ENCODE measurements at regions of chr6 and their contacts with region 1.

Region 1: DNA sequence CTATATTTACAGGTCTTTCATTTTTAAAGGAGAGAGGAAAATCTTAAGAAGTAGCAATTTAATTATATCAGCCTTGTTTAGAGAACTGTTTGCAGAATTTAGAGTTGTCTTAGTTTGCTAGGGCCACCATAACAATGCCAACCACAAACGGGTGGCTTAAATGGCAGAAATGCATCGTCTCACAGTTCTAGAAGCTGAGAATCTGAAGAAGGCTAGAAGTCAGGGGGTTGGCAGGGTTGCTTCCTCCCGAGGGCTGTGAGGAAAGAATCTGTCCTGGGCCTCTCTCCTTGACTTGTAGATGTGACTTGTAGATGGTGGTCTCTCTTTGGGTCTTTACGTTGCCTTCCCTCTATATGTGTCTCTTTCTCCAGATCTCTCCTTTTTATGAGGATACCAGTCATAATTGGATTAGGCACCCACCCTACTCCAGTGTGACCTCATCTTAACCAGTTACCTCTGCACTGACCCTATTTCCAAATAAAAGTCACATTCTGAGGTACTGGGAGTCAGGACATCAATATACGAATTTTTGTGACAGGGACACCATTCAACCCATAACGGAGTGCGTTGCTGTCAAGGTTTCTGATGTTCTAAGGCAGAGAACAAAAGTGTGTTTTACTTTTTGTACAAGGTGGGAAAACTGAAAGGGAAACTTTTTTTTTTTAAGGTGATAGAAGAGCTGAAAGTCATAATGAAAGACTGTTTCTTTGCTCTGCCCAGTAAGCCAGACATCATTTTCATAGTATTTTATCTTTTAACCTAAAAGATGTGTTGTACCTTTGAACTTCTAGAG is 84.4 kb downstream of the SAMD3 start:
- DNase-seq: no peak
- ATAC-seq: peak; percentile 74
- H3K4me3 Mint-ChIP-seq: peak overlapping the region; percentile 56
- H3K27ac Mint-ChIP-seq: peak overlapping the region; percentile 78
- H3K4me1 Mint-ChIP-seq: peaks cover 65% of the 10 kb centered on the region
- H3K27me3 Mint-ChIP-seq: no peaks in the 10 kb centered on the region

Region 2: DNA sequence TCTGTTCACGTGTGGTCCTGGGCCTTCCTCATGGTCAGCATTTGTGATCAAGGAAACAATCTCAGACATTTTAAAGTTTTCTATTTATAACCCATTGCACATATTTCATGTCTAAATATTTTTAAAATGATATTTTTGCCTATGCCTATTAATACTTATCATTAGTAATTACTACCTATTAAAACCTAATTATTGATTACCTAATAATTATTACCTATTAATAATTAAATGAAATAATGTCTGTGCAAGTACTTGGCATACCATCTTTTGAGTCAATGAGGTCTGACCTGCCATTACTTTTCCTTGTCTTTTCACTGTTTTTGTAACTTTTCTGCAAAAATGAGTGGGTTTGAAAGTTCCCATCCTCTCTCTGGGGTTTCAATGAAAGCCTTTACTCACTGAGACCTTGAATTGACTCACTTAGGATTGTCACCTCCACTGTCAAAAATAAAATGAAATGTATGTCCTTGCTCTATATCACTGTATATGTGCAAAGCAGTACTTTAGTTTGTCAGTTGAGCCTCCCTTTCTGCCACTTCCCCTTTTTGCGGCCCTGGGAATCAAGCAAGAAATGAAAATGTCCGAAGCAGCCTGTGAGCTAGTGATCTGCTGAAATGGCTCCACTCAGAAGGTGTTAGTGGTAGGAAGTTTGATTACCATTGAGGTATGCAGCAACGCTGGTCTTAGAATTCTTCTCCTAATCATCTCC is 32.2 kb before region 1 on chr6:
- CTCF ChIA-PET with region 1: no interaction called
- POLR2A ChIA-PET with region 1: no interaction called
- intact Hi-C with region 1: no loop called
- DNase-seq: no peak
- ATAC-seq: no peak
- H3K4me3 Mint-ChIP-seq: no peak overlapping the region
- H3K27ac Mint-ChIP-seq: no peak overlapping the region
- H3K4me1 Mint-ChIP-seq: peaks cover 7% of the 10 kb centered on the region
- H3K27me3 Mint-ChIP-seq: no peaks in the 10 kb centered on the region

Region 3: DNA sequence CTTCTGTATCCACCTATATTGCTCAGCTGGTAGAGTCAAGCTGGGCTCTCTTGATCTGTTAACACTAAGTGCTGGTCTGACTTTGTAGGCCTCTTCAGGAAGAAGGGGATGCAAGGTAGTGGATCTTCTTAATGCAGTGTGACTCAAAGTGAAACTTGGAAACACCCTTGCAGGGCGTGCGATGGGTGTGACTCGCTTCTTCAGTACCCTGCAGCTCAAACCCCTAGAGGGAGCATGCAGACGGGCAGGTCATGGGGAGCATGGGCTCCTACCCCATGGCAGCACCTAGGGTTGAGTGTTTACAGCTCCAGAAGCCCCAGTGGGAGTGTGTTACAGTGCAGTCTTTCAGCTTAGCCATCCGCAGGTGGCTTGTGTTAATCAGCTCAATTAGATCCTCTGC is 85.2 kb after region 1 on chr6:
- CTCF ChIA-PET with region 1: no interaction called
- POLR2A ChIA-PET with region 1: no interaction called
- intact Hi-C with region 1: loop called (anchors 2 to 5 kb)
- DNase-seq: peak; percentile 82
- ATAC-seq: peak; percentile 98
- H3K4me3 Mint-ChIP-seq: no peak overlapping the region
- H3K27ac Mint-ChIP-seq: no peak overlapping the region
- H3K4me1 Mint-ChIP-seq: peaks cover 34% of the 10 kb centered on the region
- H3K27me3 Mint-ChIP-seq: no peaks in the 10 kb centered on the region